MCF 10A (cell line): ENCODE measurements at regions of chr1 and their contacts with region 1.

Region 1: DNA sequence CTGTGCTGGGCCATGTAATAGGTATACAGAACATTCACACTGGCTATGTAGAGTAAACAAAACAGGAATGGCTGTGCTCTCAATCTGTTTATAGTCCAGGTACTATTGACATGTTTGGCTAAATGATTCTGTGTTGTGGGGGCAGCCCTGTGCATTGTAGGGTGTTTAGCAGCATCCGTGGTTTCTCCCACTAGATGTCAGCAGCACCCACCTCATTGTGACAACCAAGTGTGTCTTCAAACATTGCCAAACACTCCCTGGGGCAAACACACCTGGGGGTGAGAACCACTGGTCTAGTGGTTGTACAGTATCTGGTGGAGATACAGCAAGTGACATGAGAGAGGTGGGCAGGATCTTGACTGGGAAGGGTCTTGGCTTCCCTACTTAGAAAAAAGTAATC is 80.4 kb upstream of the SPATA6 start:
- DNase-seq: peak; percentile 47
- H3K4me3 Mint-ChIP-seq: no peak overlapping the region
- H3K27ac Mint-ChIP-seq: no peak overlapping the region
- H3K4me1 Mint-ChIP-seq: peaks cover 13% of the 10 kb centered on the region
- H3K27me3 Mint-ChIP-seq: peaks cover 20% of the 10 kb centered on the region
- CTCF ChIP-seq: peak; percentile 23

Region 2: GRCh38 chr1:48263041-48263440 is 289.4 kb before region 1 on chr1:
- CTCF ChIA-PET with region 1: no interaction called
- POLR2A ChIA-PET with region 1: no interaction called
- intact Hi-C with region 1: no loop called
- DNase-seq: no peak
- H3K4me3 Mint-ChIP-seq: no peak overlapping the region
- H3K27ac Mint-ChIP-seq: no peak overlapping the region
- H3K4me1 Mint-ChIP-seq: no peaks in the 10 kb centered on the region
- H3K27me3 Mint-ChIP-seq: no peaks in the 10 kb centered on the region
- CTCF ChIP-seq: no peak

Region 3: GRCh38 chr1:48524892-48525467 is 27.4 kb before region 1 on chr1:
- CTCF ChIA-PET with region 1: no interaction called
- POLR2A ChIA-PET with region 1: no interaction called
- intact Hi-C with region 1: no loop called
- DNase-seq: no peak
- H3K4me3 Mint-ChIP-seq: no peak overlapping the region
- H3K27ac Mint-ChIP-seq: no peak overlapping the region
- H3K4me1 Mint-ChIP-seq: peaks cover 20% of the 10 kb centered on the region
- H3K27me3 Mint-ChIP-seq: peaks cover 28% of the 10 kb centered on the region
- CTCF ChIP-seq: no peak

Region 4: GRCh38 chr1:48697066-48697707 is 144.8 kb after region 1 on chr1:
- CTCF ChIA-PET with region 1: interaction called, 5 read pairs
- POLR2A ChIA-PET with region 1: no interaction called
- intact Hi-C with region 1: loop called (anchors 1 kb)
- DNase-seq: peak; percentile 68
- H3K4me3 Mint-ChIP-seq: no peak overlapping the region
- H3K27ac Mint-ChIP-seq: no peak overlapping the region
- H3K4me1 Mint-ChIP-seq: peaks cover 10% of the 10 kb centered on the region
- H3K27me3 Mint-ChIP-seq: peaks cover 16% of the 10 kb centered on the region
- CTCF ChIP-seq: peak; percentile 81

Region 5: GRCh38 chr1:48761986-48762385 is 209.6 kb after region 1 on chr1:
- CTCF ChIA-PET with region 1: no interaction called
- POLR2A ChIA-PET with region 1: no interaction called
- intact Hi-C with region 1: no loop called
- DNase-seq: no peak
- H3K4me3 Mint-ChIP-seq: no peak overlapping the region
- H3K27ac Mint-ChIP-seq: no peak overlapping the region
- H3K4me1 Mint-ChIP-seq: no peaks in the 10 kb centered on the region
- H3K27me3 Mint-ChIP-seq: no peaks in the 10 kb centered on the region
- CTCF ChIP-seq: no peak

Region 6: GRCh38 chr1:48817505-48818114 is 265.2 kb after region 1 on chr1:
- CTCF ChIA-PET with region 1: interaction called, 4 read pairs
- POLR2A ChIA-PET with region 1: no interaction called
- intact Hi-C with region 1: loop called (anchors 1 kb)
- DNase-seq: peak; percentile 72
- H3K4me3 Mint-ChIP-seq: no peak overlapping the region
- H3K27ac Mint-ChIP-seq: no peak overlapping the region
- H3K4me1 Mint-ChIP-seq: no peaks in the 10 kb centered on the region
- H3K27me3 Mint-ChIP-seq: no peaks in the 10 kb centered on the region
- CTCF ChIP-seq: peak; percentile 62